ENCODE measurements at regions of chr3 and their contacts with region 1.

Region 1: GRCh38 chr3:47989981-47990440 is 26.2 kb downstream of the MAP4 start:
- DNase-seq: peak; percentile 53
- H3K4me3 Mint-ChIP-seq: no peak overlapping the region
- H3K27ac Mint-ChIP-seq: no peak overlapping the region
- H3K4me1 Mint-ChIP-seq: peaks cover 6% of the 10 kb centered on the region
- H3K27me3 Mint-ChIP-seq: no peaks in the 10 kb centered on the region

Region 2: GRCh38 chr3:47193871-47194859 is 795.8 kb before region 1 on chr3:
- intact Hi-C with region 1: no loop called
- DNase-seq: no peak
- H3K4me3 Mint-ChIP-seq: no peak overlapping the region
- H3K27ac Mint-ChIP-seq: no peak overlapping the region
- H3K4me1 Mint-ChIP-seq: no peaks in the 10 kb centered on the region
- H3K27me3 Mint-ChIP-seq: no peaks in the 10 kb centered on the region

Region 3: GRCh38 chr3:47522082-47522987 is 467.7 kb before region 1 on chr3:
- intact Hi-C with region 1: loop called (anchors 2 kb)
- DNase-seq: peak; percentile 71
- H3K4me3 Mint-ChIP-seq: no peak overlapping the region
- H3K27ac Mint-ChIP-seq: no peak overlapping the region
- H3K4me1 Mint-ChIP-seq: peaks cover 9% of the 10 kb centered on the region
- H3K27me3 Mint-ChIP-seq: no peaks in the 10 kb centered on the region

Region 4: DNA sequence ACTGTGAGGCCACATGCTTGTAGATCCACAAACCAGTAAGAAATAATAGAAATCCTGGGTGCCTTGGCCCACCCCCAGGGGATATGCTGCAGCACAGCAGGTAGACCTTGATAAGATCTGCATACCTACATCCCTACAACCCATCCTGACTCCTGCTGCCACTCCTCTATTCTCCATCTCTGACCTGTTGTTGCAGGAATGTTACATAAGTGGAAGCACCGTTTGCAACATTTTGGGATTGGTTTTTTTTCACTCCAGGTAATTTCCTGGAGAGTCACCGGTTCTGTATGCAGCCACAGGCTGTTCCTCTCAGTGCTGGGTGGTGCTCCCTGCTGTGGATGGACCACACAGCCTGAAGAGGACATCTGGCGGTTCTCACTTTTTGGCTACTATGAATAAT is 395.2 kb before region 1 on chr3:
- intact Hi-C with region 1: no loop called
- DNase-seq: no peak
- H3K4me3 Mint-ChIP-seq: no peak overlapping the region
- H3K27ac Mint-ChIP-seq: no peak overlapping the region
- H3K4me1 Mint-ChIP-seq: no peaks in the 10 kb centered on the region
- H3K27me3 Mint-ChIP-seq: no peaks in the 10 kb centered on the region

Region 5: GRCh38 chr3:47836986-47837385 is 153.0 kb before region 1 on chr3:
- intact Hi-C with region 1: loop called (anchors 1 kb)
- DNase-seq: no peak
- H3K4me3 Mint-ChIP-seq: no peak overlapping the region
- H3K27ac Mint-ChIP-seq: no peak overlapping the region
- H3K4me1 Mint-ChIP-seq: no peaks in the 10 kb centered on the region
- H3K27me3 Mint-ChIP-seq: no peaks in the 10 kb centered on the region

Region 6: DNA sequence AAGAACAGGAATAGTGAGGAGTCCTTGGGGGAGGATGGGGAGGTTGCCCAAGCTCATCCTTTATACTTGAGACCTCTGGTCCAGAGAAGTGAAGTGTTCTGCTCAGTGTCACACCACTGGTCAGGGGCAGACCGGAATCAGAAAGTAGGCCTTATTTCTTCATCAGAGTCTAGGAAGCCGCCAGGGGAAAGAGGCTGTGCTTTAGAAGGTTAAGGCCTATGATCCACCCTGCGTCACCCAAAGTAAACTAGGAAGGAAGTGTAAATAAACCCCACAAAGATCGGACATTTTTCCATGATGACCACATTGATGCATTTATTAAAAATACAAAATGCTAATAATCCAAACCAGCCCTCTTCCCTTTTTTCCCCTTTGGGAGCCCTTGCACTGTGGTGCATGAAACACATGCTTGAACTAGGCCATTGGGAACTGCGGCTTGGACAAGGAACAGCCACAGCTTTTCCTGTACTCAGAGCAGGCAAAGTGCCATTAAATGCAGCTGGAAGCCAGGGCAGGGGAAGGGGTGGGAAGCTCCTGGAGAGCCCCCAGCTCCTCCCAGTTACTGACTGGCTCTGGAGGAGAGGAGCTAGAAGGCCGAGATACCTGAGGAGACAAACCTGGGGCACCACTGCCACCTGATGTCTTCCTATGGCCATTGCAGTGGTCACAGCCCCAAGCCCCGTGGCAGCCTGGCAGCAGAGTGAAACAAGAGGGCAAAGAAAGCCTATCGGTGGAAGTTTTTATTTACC is 161.2 kb after region 1 on chr3:
- intact Hi-C with region 1: loop called (anchors 10 kb)
- DNase-seq: peak; percentile 50
- H3K4me3 Mint-ChIP-seq: no peak overlapping the region
- H3K27ac Mint-ChIP-seq: no peak overlapping the region
- H3K4me1 Mint-ChIP-seq: peaks cover 2% of the 10 kb centered on the region
- H3K27me3 Mint-ChIP-seq: no peaks in the 10 kb centered on the region

Measured in activated T-helper 2 cell treated with anti-CD3 and anti-CD28 coated beads, Interferon-gamma antibody, Interleukin-2, Interleukin-4, amounts not matched to agents 10 μg/mL and 5 μg/mL and 100 μg/mL, durations not matched to agents 14 hours and 24 hours and 36 hours (primary cell).